Heart right ventricle (tissue), 16 donors: ENCODE measurements at regions of chr15 and their contacts with region 1.

Region 1: DNA sequence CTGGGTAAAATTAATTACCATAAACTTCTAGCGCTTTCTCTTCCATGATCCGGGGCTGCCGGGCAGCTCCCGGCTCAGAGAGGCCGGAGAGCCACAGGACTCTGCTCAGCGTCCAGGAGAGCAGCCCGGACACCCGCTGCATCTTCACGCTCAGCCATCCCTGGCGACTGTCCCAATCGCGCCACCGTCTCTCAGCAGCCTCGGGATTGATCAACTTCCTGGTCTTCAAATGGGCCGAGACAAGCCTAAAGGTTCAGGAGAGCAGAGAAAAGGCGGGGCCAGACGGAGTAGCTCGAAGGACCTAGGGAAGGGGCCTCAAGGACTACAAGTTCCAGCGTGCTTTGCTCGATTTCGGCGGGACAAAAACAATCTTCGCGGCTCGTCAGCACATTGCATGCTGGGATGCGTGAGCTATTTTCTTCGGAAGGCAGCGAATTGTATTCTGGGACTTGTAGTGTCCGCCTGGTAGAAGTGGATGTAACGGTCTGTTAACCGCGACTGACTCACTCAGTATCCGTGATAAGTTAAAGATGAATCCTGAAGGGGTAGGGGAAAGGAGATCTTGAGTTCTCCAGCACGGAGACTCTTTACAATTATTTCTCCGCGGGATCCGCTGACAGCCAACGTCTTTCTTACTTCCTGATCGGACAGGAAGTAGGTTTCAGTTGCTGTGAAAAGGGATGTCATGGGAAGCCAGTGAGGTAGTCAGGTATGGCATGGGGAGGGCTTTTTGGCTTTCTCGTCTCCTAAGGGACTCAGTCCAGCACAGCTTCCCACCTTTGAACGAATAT is at the start of gene CIAO2A:
- DNase-seq: peak; percentile 87 to 97
- ATAC-seq: peak; percentile 85 to 91 (median 87)
- H3K4me3 ChIP-seq: peak within 1 kb of the TSS; percentile 57 to 82 (median 74)
- H3K27ac ChIP-seq: peak within 1 kb of the TSS; percentile 78 to 96 (median 87)
- H3K4me1 ChIP-seq: peaks cover 6 to 85% (median 80%) of the 10 kb centered on the region in 9 donors
- H3K27me3 ChIP-seq: no peaks in the 10 kb centered on the region
- CTCF ChIP-seq: no peak
- total RNA-seq, gene CIAO2A: 36.4 to 65.6 (median 52.3) TPM

Region 2: GRCh38 chr15:64153480-64154367 is 59.9 kb after region 1 on chr15:
- intact Hi-C with region 1: loop called in 7 of 10 experiments (anchors 5 to 10 kb)
- DNase-seq: peak; percentile 89 to 91
- ATAC-seq: peak; percentile 69 to 94 (median 86)
- H3K4me3 ChIP-seq: peak overlapping the region in 1 of 10 donors; percentile 14
- H3K27ac ChIP-seq: peak overlapping the region; percentile 7 to 85 (median 78)
- H3K4me1 ChIP-seq: peaks cover 32 to 72% (median 58%) of the 10 kb centered on the region in 9 donors
- H3K27me3 ChIP-seq: peaks cover 0 to 32% (median 0%) of the 10 kb centered on the region in 7 donors
- CTCF ChIP-seq: peak; percentile 96 to 100 (median 98)

Region 3: GRCh38 chr15:64162870-64163658 is 69.2 kb after region 1 on chr15 and contains the start of gene PPIB:
- intact Hi-C with region 1: loop called in 4 of 10 experiments (anchors 2 to 10 kb)
- DNase-seq: peak; percentile 97 to 99
- ATAC-seq: peak; percentile 95 to 98 (median 97)
- H3K4me3 ChIP-seq: peak within 1 kb of the TSS; percentile 51 to 95 (median 92)
- H3K27ac ChIP-seq: peak within 1 kb of the TSS; percentile 78 to 95 (median 90)
- H3K4me1 ChIP-seq: peaks cover 27 to 56% (median 51%) of the 10 kb centered on the region in 9 donors
- H3K27me3 ChIP-seq: no peaks in the 10 kb centered on the region
- CTCF ChIP-seq: peak in 8 of 9 donors; percentile 39 to 68 (median 48)
- total RNA-seq, gene PPIB: 60.3 to 178 (median 83.7) TPM

Region 4: DNA sequence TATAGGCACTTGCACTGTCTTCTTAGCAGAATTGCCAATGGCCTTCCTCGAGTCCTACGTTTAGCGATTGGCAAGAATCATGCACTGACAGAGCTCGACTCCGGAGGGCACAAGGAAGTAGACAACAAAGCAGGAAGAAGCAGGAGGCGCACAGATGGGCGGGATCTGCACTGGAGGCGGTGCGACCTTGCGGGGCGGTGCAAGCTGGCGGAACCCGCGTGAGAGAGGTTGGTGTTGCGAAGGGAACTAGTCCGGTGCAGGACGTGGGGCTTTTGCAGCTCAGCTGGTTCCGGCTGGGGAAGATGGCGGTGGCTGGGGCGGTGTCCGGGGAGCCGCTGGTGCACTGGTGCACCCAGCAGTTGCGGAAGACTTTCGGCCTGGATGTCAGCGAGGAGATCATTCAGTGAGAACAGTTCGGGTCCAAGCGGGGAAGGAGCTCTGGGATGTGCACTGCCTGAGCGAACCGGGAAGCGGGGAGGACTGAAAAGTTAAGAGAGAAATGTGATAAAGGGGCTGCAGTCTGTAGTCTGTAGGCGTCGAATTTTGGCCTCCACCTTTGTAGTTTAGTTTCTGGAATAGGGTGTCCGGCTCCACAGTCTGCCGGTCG is 293.8 kb after region 1 on chr15 and contains the start of gene TRIP4:
- intact Hi-C with region 1: loop called in 1 of 10 experiments (anchors 10 kb)
- DNase-seq: peak; percentile 94 to 95
- ATAC-seq: peak; percentile 99 to 100 (median 100)
- H3K4me3 ChIP-seq: peak within 1 kb of the TSS; percentile 57 to 88 (median 73)
- H3K27ac ChIP-seq: peak within 1 kb of the TSS; percentile 5 to 87 (median 82)
- H3K4me1 ChIP-seq: peaks cover 0 to 22% (median 14%) of the 10 kb centered on the region in 9 donors
- H3K27me3 ChIP-seq: no peaks in the 10 kb centered on the region
- CTCF ChIP-seq: peak in 4 of 9 donors; percentile 21 to 34 (median 27)
- total RNA-seq, gene TRIP4: 15.3 to 20.0 (median 17.4) TPM